ENCODE measurements at regions of chr17 and their contacts with region 1.

Region 1: GRCh38 chr17:28661635-28662537 is at the starts of genes SDF2 and SUPT6H:
- DNase-seq: peak; percentile 98
- H3K4me3 Mint-ChIP-seq: peak within 1 kb of the TSS; percentile 99
- H3K27ac Mint-ChIP-seq: peak within 1 kb of the TSS; percentile 97
- H3K4me1 Mint-ChIP-seq: peaks cover 43% of the 10 kb centered on the region
- H3K27me3 Mint-ChIP-seq: no peaks in the 10 kb centered on the region
- total RNA-seq, gene SDF2: 43.8 and 46.2 TPM in 2 replicates
- total RNA-seq, gene SUPT6H: 100 and 108 TPM in 2 replicates

Region 2: DNA sequence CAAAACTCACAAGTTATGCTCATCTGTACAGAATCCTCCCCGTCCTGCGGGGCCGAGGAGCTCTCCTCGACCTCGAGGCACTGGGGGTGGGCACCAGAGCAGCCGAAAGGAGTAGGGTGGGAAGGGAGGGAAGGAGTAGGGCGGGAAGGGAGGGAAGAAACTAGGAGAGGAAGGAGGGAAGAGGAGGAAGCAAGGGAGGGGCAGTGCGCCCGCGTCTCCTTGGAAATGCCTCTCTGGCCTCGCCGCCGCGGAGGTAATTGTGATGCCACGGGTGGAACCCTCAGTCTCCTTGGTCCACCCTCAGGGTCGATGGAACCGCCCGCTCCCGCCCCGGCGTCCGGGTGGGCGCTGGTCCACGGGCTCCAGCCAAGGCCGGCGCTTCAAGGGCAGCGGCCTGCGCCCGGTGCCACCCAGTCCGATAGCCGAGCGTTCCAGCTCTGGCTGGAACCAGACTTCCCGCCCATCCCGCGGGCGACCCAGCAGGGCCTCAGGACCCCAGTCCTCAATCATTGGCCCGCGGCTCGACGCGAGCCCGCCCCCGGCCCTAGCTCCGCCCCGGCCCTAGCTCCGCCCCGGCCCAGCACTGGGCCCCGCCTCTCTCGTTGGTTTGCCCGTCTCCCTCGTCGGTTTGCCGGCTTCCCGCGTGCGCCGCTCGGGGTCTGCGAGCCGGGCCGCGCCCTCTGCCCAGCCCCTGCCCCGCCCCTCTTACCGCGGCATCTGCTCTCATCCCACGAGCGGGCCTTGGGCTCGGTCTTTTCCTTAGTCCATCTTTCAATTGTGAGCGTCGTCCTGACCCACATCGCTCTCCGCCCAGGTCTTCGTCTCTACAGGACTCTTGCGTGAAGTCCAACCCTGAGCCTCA is 49.2 kb after region 1 on chr17:
- intact Hi-C with region 1: loop called (anchors 5 kb)
- DNase-seq: peak; percentile 99
- H3K4me3 Mint-ChIP-seq: peak overlapping the region; percentile 91
- H3K27ac Mint-ChIP-seq: peak overlapping the region; percentile 95
- H3K4me1 Mint-ChIP-seq: peaks cover 17% of the 10 kb centered on the region
- H3K27me3 Mint-ChIP-seq: peaks cover 15% of the 10 kb centered on the region

Measured in activated CD4-positive, alpha-beta T cell treated with anti-CD3 and anti-CD28 coated beads, Interleukin-2, amount 10 ng/mL, durations not matched to agents 24 days and 14 days (primary cell).